OCI-LY7 (cell line): ENCODE measurements at regions of chr19 and their contacts with region 1.

Region 1: GRCh38 chr19:55516878-55517620 is 19.9 kb downstream of the SBK2 start:
- DNase-seq: peak; percentile 93
- H3K4me3 ChIP-seq: peak overlapping the region; percentile 58
- H3K27ac ChIP-seq: no peak overlapping the region
- H3K4me1 ChIP-seq: peaks cover 8% of the 10 kb centered on the region
- CTCF ChIP-seq: peak; percentile 82

Region 2: DNA sequence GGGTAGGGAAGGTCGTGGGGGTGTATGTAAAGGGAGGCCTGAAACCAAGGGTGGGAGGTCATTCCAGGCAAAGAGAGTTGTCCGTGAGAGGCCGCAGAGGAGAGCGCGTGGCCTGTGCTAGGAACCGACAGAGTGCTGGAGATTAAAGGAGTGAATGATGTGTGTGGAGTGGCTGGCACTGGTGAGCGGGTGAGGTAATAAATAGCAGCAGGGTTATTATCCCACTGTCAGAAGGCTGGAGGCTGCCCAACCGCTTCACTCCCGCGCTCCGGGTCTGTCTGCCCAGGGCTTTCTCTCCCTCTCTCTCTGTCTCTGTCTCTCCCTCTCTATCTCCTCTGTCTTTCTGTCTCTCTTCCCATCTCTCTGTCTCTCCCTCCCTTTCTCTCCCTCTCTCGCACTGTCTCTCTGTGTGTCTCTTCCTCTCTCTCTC is 46.2 kb after region 1 on chr19:
- CTCF ChIA-PET with region 1: no interaction called
- POLR2A ChIA-PET with region 1: no interaction called
- intact Hi-C with region 1: no loop called
- DNase-seq: no peak
- H3K4me3 ChIP-seq: no peak overlapping the region
- H3K27ac ChIP-seq: no peak overlapping the region
- H3K4me1 ChIP-seq: no peaks in the 10 kb centered on the region
- CTCF ChIP-seq: no peak

Region 3: GRCh38 chr19:55605637-55606470 is 88.8 kb after region 1 on chr19 and contains the start of gene ZNF865:
- CTCF ChIA-PET with region 1: no interaction called
- POLR2A ChIA-PET with region 1: no interaction called
- intact Hi-C with region 1: loop called (anchors 1 kb)
- DNase-seq: peak; percentile 80
- H3K4me3 ChIP-seq: peak within 1 kb of the TSS; percentile 95
- H3K27ac ChIP-seq: peak within 1 kb of the TSS; percentile 97
- H3K4me1 ChIP-seq: peaks cover 33% of the 10 kb centered on the region
- CTCF ChIP-seq: peak; percentile 88
- total RNA-seq, gene ZNF865: 2.1 and 3.0 TPM in 2 replicates

Region 4: DNA sequence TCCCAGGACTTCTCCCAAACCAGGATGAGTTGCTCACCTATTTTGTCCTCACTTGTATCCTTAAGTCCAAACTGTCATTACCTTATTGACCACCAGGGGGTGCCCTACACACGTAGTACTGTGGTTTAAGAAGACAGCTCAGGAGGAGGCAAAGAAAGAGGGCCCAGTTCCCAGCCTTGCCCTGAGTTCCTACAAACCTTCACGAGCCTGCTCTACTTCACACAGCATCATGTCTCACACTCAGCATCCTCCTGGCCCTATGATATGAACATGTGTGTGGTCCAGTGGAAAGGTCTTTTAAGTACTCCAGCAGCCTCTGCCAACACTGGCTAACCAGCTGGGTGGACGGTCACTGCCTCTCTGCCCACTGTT is 115.4 kb after region 1 on chr19:
- CTCF ChIA-PET with region 1: interaction called, 3 read pairs
- POLR2A ChIA-PET with region 1: no interaction called
- intact Hi-C with region 1: loop called (anchors 1 kb)
- DNase-seq: peak; percentile 96
- H3K4me3 ChIP-seq: no peak overlapping the region
- H3K27ac ChIP-seq: no peak overlapping the region
- H3K4me1 ChIP-seq: peaks cover 34% of the 10 kb centered on the region
- CTCF ChIP-seq: peak; percentile 91